ENCODE measurements at regions of chr16 and their contacts with region 1.

Region 1: GRCh38 chr16:31128711-31129567 is 6.6 kb downstream of the PRSS8 start:
- DNase-seq: peak; percentile 69 to 94
- H3K4me3 ChIP-seq: no peak overlapping the region
- H3K27ac ChIP-seq: peak overlapping the region; percentile 91
- H3K4me1 ChIP-seq: peaks cover 56% of the 10 kb centered on the region
- H3K27me3 ChIP-seq: no peaks in the 10 kb centered on the region
- CTCF ChIP-seq: no peak

Region 2: GRCh38 chr16:30941600-30942425 is 187.1 kb before region 1 on chr16:
- CTCF ChIA-PET with region 1: interaction called, 10 read pairs
- POLR2A ChIA-PET with region 1: no interaction called
- intact Hi-C with region 1: no loop called
- DNase-seq: peak; percentile 63 to 87
- H3K4me3 ChIP-seq: no peak overlapping the region
- H3K27ac ChIP-seq: no peak overlapping the region
- H3K4me1 ChIP-seq: peaks cover 6% of the 10 kb centered on the region; the same call in 1 of the 2 replicates
- H3K27me3 ChIP-seq: no peaks in the 10 kb centered on the region
- CTCF ChIP-seq: peak; percentile 98

Region 3: DNA sequence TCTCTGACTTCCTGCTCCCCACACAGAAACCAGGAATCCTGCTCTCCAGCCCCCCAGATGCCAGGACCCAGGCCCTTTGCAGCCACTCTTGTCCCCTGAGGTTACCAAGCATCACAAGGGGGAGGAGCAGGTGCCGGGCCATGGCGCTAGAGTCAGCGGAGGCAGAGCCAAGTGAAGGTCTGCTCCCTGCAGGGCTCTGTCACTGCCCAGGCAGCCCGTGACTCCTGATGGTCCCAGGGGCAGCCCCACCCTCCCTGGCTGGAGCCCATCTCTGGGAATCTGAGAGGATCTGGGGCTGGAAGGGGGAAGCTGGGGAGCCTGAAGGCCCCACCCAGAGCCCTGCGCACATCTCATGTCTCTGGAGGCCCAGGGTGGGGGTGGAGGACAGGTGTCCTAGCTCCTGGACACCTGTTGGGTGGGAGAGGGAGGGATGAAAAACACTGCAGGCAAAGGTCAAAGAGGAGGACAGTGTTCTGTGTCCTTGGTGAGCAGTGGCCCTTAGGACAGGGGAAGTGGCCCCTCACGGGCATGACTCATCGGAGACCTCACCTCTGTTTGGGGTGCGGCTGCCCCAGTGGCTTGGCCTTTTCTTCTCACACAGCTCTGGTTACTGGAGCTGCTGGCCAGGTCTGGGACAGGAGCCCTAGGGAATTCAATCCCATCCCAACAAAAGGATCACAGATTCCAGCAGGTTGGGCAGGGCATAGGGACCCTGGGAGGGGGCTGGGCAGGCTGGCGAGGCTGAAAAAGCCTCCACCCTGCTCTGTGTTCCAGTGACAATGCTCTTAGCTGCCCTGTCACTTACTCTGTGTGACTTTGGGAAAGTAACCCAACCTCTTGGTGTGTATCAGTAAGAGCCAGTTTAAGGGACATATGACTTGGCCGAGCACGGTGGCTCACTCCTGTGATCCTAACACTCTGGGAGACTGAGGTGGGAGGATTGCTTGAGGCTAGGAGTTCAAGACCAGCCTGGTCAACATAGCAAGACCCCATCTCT is 21.3 kb after region 1 on chr16 and contains the start of gene PRSS36:
- CTCF ChIA-PET with region 1: interaction called, 4 read pairs
- POLR2A ChIA-PET with region 1: no interaction called
- intact Hi-C with region 1: loop called (anchors 1 kb)
- DNase-seq: peak; percentile 72 to 89
- H3K4me3 ChIP-seq: no peak within 1 kb of the TSS
- H3K27ac ChIP-seq: peak within 1 kb of the TSS; percentile 68
- H3K4me1 ChIP-seq: peaks cover 32% of the 10 kb centered on the region
- H3K27me3 ChIP-seq: no peaks in the 10 kb centered on the region
- CTCF ChIP-seq: no peak
- total RNA-seq, gene PRSS36: 4.1 and 6.8 TPM in 2 replicates